Breast epithelium (tissue), 4 donors: ENCODE measurements at regions of chr1 and their contacts with region 1.

Region 1: DNA sequence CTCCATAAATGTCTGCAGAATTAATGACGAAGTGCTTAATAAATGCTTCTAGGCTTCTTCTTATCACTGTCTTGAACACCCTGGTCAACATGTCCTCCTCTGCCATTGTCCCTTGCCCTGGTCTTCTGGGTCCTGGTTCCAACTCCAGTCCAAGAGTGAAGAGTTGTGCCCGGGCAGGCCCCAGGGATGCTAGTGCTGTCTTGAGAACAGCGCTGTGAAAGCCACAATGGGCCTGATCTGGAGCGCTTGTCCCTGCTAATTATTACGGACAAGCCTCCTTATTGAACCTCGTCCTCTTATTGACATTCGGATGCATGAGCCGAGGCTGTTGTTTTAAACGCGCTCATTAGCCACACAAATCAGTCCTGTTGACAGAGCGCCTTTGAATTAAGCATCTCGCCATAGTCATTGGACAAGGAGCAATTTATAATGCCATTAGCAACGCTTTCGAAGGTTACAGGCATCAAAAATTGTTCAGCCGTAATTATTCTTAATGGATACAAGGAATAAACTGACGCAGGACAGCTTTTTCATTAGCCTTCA is 211.6 kb upstream of the POU3F1 start:
- DNase-seq: no peak
- H3K4me3 ChIP-seq: no peak overlapping the region
- H3K27ac ChIP-seq: no peak overlapping the region
- H3K4me1 ChIP-seq: no peaks in the 10 kb centered on the region
- H3K27me3 ChIP-seq: no peaks in the 10 kb centered on the region
- CTCF ChIP-seq: no peak
- POLR2A ChIP-seq: no peak

Region 2: DNA sequence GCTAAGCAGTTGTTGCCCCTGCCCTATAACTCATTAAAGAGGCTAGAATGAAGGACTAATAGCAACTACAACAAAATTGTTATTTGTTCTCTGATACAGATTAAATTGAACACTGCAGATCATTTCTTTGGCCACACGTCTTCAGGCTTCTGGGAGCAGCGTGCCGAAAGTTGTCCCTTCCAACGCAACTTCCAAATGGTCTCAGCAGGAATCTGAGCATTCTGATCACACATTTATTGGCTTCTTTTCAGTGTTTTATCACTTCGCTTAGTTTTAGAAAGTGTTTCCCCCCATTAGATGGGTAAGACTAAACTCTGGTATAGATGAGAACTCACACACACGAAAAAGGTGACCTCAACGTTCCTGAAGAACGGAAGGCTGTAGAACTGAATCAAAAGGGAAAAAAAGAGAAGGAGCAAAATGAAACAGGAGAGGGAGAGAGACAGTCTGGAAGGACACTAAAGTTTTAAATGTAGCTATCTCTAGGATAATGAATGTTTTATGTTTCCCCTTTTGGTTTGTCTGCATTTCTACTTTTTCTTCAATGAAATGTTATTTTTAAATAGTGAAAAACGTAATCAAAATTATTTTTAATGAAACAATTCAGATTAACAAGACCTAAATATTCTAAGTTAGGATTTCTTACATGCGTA is 264.9 kb after region 1 on chr1:
- intact Hi-C with region 1: loop called (anchors 2 kb)
- DNase-seq: no peak
- H3K4me3 ChIP-seq: no peak overlapping the region
- H3K27ac ChIP-seq: no peak overlapping the region
- H3K4me1 ChIP-seq: no peaks in the 10 kb centered on the region
- H3K27me3 ChIP-seq: no peaks in the 10 kb centered on the region
- CTCF ChIP-seq: no peak
- POLR2A ChIP-seq: no peak